Left cardiac atrium (tissue), 4 donors: ENCODE measurements at regions of chr5 and their contacts with region 1.

Region 1: DNA sequence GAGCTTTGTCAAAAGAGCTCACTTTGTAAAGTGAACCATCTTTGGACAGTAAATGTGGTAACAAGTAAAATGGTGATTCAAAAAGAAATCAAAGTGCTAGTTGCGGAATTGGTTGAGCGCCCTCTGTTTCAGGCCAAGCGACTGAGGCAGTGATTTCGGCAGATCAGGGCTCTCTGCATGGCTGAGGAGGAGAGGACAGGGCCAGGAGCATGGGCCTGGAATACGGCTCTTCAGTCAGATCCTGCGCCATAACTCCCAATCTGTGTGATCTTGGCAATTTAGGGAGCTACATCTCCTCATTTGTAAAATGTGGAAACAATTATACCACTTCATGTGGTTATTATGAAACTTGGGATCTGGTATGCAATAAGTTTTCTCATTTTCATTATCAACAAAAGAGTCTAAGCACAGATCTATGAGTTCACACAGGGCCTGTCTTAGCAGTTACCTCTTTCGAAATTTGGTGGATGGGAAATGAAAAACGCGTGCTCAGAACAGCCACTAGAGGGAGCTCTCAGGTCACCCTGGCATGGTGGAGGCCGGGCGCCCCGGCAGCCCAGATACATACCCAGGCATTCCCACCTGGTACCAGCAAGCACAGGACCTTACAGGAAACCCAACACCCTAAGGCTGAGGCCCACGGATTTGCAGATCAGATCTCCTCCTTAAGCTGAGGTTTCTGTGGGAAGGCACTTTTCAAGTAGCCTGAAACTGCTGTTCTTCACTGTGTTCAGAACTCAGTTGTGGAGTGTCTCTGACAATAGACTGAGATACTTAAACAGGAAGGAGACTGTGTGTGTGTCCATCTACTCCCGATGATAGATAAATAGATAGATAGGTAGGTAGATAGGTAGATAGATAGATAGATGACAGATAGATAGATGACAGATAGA is 303.7 kb downstream of the RAB3C start:
- DNase-seq: peak; percentile 70
- ATAC-seq: peak; percentile 46 to 60

Region 2: DNA sequence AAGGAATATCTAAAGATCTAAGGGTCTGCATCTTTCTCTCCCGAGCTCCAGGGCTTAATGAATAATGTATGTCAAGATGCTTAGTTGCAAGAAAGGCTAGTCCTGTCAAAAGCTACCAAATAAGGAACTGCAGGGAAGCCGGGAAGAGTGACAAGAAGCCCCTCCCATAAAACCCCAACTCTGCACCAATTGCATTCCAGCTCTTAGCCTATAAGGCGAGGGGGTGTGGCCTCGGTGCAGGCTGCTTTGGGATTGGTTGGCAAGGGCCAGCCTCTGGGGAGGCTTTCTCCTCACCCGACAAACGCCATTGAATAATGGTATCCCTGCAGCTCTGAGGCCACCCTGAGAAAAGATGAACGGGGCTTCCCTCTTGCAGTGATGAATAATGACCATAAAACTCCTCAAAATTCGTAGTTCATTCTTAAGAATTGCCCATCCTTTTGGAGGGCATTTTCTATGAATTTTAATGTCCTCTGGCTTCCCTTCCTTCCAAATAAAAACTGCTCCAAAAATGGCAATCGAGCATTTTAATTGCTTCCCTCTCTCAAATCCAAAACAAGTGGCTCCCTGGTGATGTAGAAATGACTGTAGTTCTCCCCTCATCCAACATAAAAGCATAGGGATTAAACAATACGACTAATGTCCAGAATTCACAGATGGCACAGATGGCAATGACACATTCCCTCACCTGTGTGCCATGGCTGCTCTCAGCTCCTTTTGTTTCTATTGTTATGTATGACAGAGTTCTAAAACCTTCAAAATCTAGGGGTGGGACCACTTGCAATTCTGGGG is 113.4 kb after region 1 on chr5:
- intact Hi-C with region 1: loop called (anchors 5 kb)
- DNase-seq: no peak
- ATAC-seq: peak in 1 of 2 donors; percentile 14

Region 3: DNA sequence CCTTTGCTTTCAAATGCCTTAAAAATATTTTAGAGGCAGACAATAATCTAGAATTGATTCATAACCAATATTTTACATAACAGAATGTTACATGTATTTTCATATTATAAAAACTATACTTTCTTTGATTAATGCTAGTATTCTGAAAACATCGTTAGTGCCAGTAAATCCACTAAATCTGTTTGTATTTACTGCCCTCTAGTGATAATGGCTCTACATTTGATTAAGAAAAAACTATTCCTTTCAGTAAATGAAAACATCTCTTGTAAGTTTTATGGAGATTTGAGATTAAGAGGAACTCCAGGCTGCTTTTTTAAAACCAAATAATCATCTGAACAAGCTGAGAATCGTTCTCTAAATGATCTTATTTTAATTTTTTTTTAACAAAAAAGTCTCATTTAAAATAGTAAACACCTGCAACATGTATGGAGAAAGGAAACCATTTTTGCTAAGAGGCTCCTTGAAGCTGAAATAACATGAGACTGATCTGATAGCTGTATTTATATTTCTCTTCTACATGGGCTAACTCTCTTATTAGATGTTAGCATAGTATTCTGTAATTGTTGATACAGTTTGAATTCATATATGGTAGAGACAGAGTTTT is 121.0 kb after region 1 on chr5:
- intact Hi-C with region 1: loop called (anchors 5 kb)
- DNase-seq: no peak
- ATAC-seq: no peak

Region 4: DNA sequence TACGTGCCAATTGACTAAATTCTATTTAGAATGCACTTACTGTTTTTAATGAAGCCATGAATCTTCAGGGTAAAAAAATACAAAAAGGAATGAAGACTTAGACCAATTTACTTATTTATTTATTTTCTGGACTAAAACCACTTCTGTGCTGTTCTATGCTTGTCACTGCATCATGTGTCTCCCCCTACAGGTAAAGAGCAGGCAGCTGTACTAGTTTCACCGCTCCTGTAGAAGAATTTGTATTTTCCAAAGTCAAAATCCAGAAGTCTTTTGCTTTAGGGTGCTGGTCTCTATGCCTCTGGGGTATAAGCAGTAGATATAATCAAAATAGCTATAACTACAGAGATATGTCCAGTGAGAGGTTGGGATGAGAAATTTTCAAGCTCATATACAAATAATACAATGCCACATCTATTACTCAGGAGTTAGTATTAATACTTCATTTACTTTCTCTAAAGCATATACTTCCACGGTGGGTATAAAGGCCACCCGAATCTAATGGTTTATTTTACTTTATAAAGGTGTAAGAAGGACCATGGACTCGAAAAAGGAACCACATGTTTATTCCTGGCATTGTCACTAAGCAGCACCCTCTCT is 287.8 kb after region 1 on chr5:
- intact Hi-C with region 1: loop called (anchors 2 to 10 kb)
- DNase-seq: no peak
- ATAC-seq: peak; percentile 79 to 88

Region 5: DNA sequence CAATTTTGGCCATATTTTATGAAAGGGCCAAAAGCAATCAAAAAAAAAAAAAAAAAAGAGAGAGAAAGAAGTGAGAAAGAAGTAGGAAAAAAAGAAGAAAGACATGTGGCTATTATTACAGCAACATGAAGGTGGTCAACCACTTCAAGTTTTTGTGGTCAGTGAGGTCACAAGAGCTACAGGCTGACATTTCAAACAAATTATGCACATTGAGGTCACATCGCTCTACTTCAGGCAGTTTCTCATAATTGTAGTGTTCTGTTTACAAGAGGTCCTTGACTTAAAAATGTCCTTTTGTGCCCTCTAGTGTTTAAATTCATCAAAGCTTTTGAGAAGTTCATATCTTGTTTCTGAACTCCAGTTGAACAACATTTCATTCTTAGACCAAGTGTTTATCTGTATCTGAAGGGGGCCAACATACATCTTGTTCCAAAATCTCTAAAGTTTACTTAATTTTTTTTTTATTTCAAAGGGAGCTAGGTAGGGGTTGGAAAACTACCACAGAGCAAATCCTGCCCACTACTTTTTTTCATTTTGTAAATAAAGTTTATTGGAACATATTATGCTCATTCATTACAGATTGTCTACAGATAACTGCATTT is 493.9 kb after region 1 on chr5:
- intact Hi-C with region 1: loop called in 1 of 2 experiments (anchors 5 kb)
- DNase-seq: no peak
- ATAC-seq: peak; percentile 57 to 68